ENCODE measurements at regions of chr3 and their contacts with region 1.

Region 1: DNA sequence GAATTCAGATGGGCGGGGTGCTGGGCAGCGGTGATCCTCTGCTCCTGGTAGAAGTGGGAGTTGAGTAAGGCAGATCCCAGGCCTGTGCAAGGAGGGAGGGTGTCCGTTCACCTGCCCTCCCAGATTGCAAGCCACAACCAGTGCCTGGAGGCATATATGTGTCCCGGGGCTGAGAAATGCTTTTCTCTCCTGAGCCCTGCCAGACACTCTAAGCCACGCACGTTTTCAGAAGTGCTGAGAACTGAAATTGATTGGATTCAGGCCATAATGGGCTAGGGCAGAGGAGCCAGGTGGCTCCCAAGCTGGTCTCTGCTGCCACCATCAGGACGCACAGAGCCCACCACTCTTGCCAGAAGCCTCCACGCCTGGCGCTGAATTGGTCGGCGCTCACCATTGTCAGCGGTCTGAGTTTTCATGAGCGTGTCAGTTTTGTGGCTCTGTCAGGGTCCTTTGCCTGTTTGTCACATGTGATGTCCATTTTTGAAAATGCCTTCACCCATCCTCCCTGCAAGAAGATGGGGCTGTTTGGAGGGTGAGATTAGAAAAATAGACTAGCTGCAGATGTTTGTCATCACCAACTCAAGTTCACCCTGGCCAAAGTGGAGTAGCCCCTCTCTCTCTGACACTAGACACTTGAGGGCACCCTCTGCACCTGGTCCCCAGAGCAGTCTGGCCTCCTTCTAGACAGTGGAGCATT is 15.4 kb upstream of the BFSP2 start:
- DNase-seq: peak; percentile 21
- ATAC-seq: peak; percentile 85
- H3K4me3 ChIP-seq: no peak overlapping the region
- H3K27ac ChIP-seq: no peak overlapping the region
- H3K4me1 ChIP-seq: peaks cover 6 to 16% of the 10 kb centered on the region in 2 experiments
- H3K27me3 ChIP-seq: peaks cover 60% of the 10 kb centered on the region
- CTCF ChIP-seq: peak; percentile 49 to 89 (median 85); a peak in 5 of 6 replicates
- POLR2A ChIP-seq: no peak
- RAD21 ChIP-seq: peak; percentile 87

Region 2: GRCh38 chr3:132352541-132353143 is 1031.8 kb before region 1 on chr3:
- CTCF ChIA-PET with region 1: no interaction called
- POLR2A ChIA-PET with region 1: no interaction called
- RAD21 ChIA-PET with region 1: no interaction called
- intact Hi-C with region 1: loop called (anchors 10 kb)
- DNase-seq: peak; percentile 61
- ATAC-seq: peak; percentile 97
- H3K4me3 ChIP-seq: no peak overlapping the region
- H3K27ac ChIP-seq: no peak overlapping the region
- H3K4me1 ChIP-seq: no peaks in the 10 kb centered on the region
- H3K27me3 ChIP-seq: no peaks in the 10 kb centered on the region
- CTCF ChIP-seq: peak; percentile 72 to 94 (median 85)
- POLR2A ChIP-seq: no peak
- RAD21 ChIP-seq: peak; percentile 86

Region 3: GRCh38 chr3:132549890-132550578 is 834.4 kb before region 1 on chr3:
- CTCF ChIA-PET with region 1: no interaction called
- POLR2A ChIA-PET with region 1: no interaction called
- RAD21 ChIA-PET with region 1: no interaction called
- intact Hi-C with region 1: loop called (anchors 10 kb)
- DNase-seq: no peak
- ATAC-seq: no peak
- H3K4me3 ChIP-seq: no peak overlapping the region
- H3K27ac ChIP-seq: no peak overlapping the region
- H3K4me1 ChIP-seq: peaks cover 0 to 10% of the 10 kb centered on the region in 2 experiments; a peak in 2 of 4 replicates
- H3K27me3 ChIP-seq: no peaks in the 10 kb centered on the region
- CTCF ChIP-seq: no peak
- POLR2A ChIP-seq: no peak
- RAD21 ChIP-seq: no peak

Region 4: DNA sequence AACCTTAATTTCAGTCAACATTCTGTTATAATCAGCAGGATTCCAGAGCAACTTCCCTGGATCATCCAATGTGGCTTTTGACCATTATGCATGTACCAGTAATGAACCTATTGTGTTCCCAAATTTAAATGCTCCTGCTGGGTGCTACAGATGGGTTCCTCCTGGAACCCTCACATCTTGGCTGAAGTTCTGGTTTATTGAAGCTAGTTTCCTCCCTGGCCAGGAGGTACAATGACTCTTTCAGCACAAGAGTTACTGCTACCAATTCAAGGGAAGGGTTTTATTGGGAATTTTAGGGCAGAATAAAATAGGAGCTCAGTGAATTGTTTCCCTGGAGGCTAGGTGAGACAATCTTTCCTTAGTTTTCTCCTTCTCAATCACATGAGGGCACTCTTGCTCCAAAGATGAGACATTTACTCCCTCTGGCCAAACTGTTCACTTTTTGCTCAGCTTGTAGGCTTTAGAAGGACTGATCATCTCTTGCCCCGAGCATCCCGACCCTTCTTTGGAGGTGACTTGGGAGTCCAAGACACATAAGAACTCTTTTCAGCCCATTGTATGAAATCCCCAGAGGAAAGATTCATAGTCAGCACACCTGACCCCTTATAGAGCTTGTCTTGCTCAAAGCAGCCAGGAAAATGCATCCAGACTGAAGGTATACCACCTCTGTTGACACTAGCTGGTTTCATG is 653.4 kb before region 1 on chr3:
- CTCF ChIA-PET with region 1: interaction called, 38 read pairs
- POLR2A ChIA-PET with region 1: no interaction called
- RAD21 ChIA-PET with region 1: no interaction called
- intact Hi-C with region 1: loop called (anchors 2 kb)
- DNase-seq: no peak
- ATAC-seq: peak; percentile 90
- H3K4me3 ChIP-seq: no peak overlapping the region
- H3K27ac ChIP-seq: no peak overlapping the region
- H3K4me1 ChIP-seq: peaks cover 0 to 7% of the 10 kb centered on the region in 2 experiments; a peak in 2 of 4 replicates
- H3K27me3 ChIP-seq: peaks cover 57% of the 10 kb centered on the region
- CTCF ChIP-seq: peak; percentile 14 to 53 (median 47); a peak in 4 of 6 replicates
- POLR2A ChIP-seq: no peak
- RAD21 ChIP-seq: peak; percentile 80

Region 5: DNA sequence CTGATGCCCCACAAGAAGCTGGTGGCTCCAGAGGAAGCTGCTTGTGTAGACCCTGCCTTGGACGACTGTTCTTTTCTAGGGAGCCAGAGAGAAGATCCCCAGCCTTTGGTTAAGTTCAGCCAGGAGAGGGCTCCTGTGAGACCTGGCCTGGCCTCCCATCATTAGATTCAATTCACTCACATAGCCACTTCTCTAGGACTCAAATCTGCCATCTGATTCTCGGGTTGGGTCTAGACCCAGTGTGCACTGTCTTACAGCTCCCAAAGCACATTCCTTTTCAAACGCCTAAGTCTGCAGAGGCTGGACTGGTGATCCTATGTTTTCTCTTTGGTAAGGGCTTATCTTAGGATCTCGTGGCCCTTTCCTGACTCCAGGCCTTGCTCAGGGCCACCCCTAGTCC is 580.6 kb before region 1 on chr3:
- CTCF ChIA-PET with region 1: no interaction called
- POLR2A ChIA-PET with region 1: no interaction called
- RAD21 ChIA-PET with region 1: no interaction called
- intact Hi-C with region 1: loop called (anchors 10 kb)
- DNase-seq: no peak
- ATAC-seq: peak; percentile 72
- H3K4me3 ChIP-seq: no peak overlapping the region
- H3K27ac ChIP-seq: no peak overlapping the region
- H3K4me1 ChIP-seq: no peaks in the 10 kb centered on the region
- H3K27me3 ChIP-seq: 0 out of 2 replicates have a peak, but pooled peaks cover 6% of the 10 kb centered on the region
- CTCF ChIP-seq: peak in 2 of 3 experiments; percentile 31; a peak in 4 of 6 replicates
- POLR2A ChIP-seq: no peak
- RAD21 ChIP-seq: peak; percentile 18; the same call in 1 of the 2 replicates

Region 6: GRCh38 chr3:132817646-132818177 is 566.8 kb before region 1 on chr3:
- CTCF ChIA-PET with region 1: no interaction called
- POLR2A ChIA-PET with region 1: no interaction called
- RAD21 ChIA-PET with region 1: no interaction called
- intact Hi-C with region 1: no loop called
- DNase-seq: no peak
- ATAC-seq: no peak
- H3K4me3 ChIP-seq: no peak overlapping the region
- H3K27ac ChIP-seq: no peak overlapping the region
- H3K4me1 ChIP-seq: no peaks in the 10 kb centered on the region
- H3K27me3 ChIP-seq: peaks cover 49% of the 10 kb centered on the region; the same call in 1 of the 2 replicates
- CTCF ChIP-seq: no peak
- POLR2A ChIP-seq: no peak
- RAD21 ChIP-seq: no peak

Region 7: GRCh38 chr3:133040696-133041523 is 343.6 kb before region 1 on chr3:
- CTCF ChIA-PET with region 1: interaction called, 25 read pairs
- POLR2A ChIA-PET with region 1: no interaction called
- RAD21 ChIA-PET with region 1: interaction called, 3 to 4 read pairs
- intact Hi-C with region 1: loop called (anchors 1 kb)
- DNase-seq: peak; percentile 51
- ATAC-seq: peak; percentile 97
- H3K4me3 ChIP-seq: no peak overlapping the region
- H3K27ac ChIP-seq: no peak overlapping the region
- H3K4me1 ChIP-seq: no peaks in the 10 kb centered on the region
- H3K27me3 ChIP-seq: peaks cover 59% of the 10 kb centered on the region
- CTCF ChIP-seq: peak; percentile 73 to 80 (median 77); a peak in 5 of 6 replicates
- POLR2A ChIP-seq: no peak
- RAD21 ChIP-seq: peak; percentile 85

Region 8: DNA sequence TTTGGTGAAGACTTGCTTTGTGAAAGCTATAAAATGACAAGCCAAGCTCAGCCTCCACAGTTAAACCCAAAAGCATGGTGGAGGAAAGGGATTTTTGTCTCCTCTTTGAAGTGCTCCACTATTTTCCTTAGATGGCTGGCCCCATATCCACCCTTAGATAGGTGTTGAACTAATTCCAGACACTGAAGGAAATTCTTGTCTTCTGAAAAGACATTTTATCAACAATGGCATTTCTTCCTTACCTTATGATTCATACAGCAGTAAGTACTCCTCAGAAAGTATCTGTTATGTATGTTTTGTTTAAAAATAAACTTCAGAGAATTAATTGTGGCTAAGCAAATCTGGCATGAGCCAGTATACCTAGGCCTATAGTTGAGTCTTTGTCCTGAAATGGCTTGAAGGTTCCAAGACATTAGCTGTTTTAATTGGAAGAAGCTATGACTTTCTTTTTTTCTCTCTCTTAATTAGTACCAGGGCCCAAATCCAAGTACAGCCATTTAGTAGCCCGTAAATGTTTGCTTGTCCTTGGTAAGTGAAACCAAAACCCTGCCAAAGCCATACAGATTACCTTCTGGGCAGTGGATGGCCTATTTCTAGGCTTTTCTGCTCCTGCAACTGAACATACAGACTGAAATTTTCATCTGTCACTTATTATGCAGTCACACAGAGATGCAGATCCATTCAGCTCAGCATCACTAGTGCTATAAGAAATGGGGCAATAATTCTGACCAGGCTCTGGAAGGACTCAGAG is 10.3 kb after region 1 on chr3:
- CTCF ChIA-PET with region 1: no interaction called
- POLR2A ChIA-PET with region 1: no interaction called
- RAD21 ChIA-PET with region 1: no interaction called
- intact Hi-C with region 1: no loop called
- DNase-seq: no peak
- ATAC-seq: no peak
- H3K4me3 ChIP-seq: no peak overlapping the region
- H3K27ac ChIP-seq: no peak overlapping the region
- H3K4me1 ChIP-seq: no peaks in the 10 kb centered on the region
- H3K27me3 ChIP-seq: peaks cover 36% of the 10 kb centered on the region; the same call in 1 of the 2 replicates
- CTCF ChIP-seq: no peak
- POLR2A ChIP-seq: no peak
- RAD21 ChIP-seq: no peak

Region 9: GRCh38 chr3:133408961-133409360 is 24.5 kb after region 1 on chr3:
- CTCF ChIA-PET with region 1: no interaction called
- POLR2A ChIA-PET with region 1: no interaction called
- RAD21 ChIA-PET with region 1: no interaction called
- intact Hi-C with region 1: no loop called
- DNase-seq: no peak
- ATAC-seq: no peak
- H3K4me3 ChIP-seq: no peak overlapping the region
- H3K27ac ChIP-seq: no peak overlapping the region
- H3K4me1 ChIP-seq: peaks cover 2 to 7% of the 10 kb centered on the region in 2 experiments; a peak in 1 of 4 replicates
- H3K27me3 ChIP-seq: peaks cover 54% of the 10 kb centered on the region
- CTCF ChIP-seq: no peak
- POLR2A ChIP-seq: no peak
- RAD21 ChIP-seq: no peak

Measured in HCT116 (cell line).